HepG2 (cell line): ENCODE measurements at regions of chr2 and their contacts with region 1.

Region 1: GRCh38 chr2:134118279-134119116 is 135.4 kb upstream of the MGAT5 start:
- DNase-seq: peak; percentile 92
- ATAC-seq: peak; percentile 47
- H3K4me3 ChIP-seq: peak overlapping the region; percentile 80 to 90 (median 83)
- H3K27ac ChIP-seq: no peak overlapping the region
- H3K4me1 ChIP-seq: peaks cover 44% of the 10 kb centered on the region
- H3K27me3 ChIP-seq: no peaks in the 10 kb centered on the region
- CTCF ChIP-seq: peak; percentile 93
- EP300 ChIP-seq: 0 out of 4 replicates have a peak, but pooled peaks of 1 of the 2 experiments have one; percentile 9
- POLR2A ChIP-seq: no peak
- RAD21 ChIP-seq: peak; percentile 94

Region 2: DNA sequence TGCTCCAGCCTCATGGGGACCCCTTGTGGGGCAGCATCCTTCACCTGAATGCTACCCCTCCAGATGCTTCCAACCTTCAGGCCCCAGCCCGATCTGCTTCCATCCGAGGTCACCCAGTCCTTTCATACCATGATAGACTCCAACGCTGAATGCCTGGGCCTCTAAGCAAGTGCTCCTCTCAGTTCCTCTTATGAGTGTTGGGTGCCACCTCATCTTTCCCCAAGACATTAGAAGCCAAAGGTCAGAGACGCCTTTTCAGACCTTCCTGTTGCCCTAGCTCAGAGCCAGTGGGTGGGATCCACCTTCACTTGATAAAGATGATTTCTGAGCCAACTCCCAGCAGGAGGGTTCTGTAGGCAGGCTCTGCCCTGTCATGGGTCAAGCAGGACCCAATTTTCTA is 39.1 kb before region 1 on chr2:
- CTCF ChIA-PET with region 1: no interaction called
- POLR2A ChIA-PET with region 1: no interaction called
- in situ Hi-C with region 1: no loop called
- intact Hi-C with region 1: no loop called
- DNase-seq: no peak
- ATAC-seq: no peak
- H3K4me3 ChIP-seq: no peak overlapping the region
- H3K27ac ChIP-seq: no peak overlapping the region
- H3K4me1 ChIP-seq: no peaks in the 10 kb centered on the region
- H3K27me3 ChIP-seq: peaks cover 1 to 15% of the 10 kb centered on the region in 2 experiments; a peak in 4 of 5 replicates
- CTCF ChIP-seq: no peak
- EP300 ChIP-seq: no peak
- POLR2A ChIP-seq: no peak
- RAD21 ChIP-seq: no peak

Region 3: GRCh38 chr2:134098321-134098720 is 20.2 kb before region 1 on chr2:
- CTCF ChIA-PET with region 1: no interaction called
- POLR2A ChIA-PET with region 1: no interaction called
- in situ Hi-C with region 1: no loop called
- intact Hi-C with region 1: loop called (anchors 2 kb)
- DNase-seq: no peak
- ATAC-seq: peak; percentile 35; the same call in 2 of the 3 replicates
- H3K4me3 ChIP-seq: no peak overlapping the region
- H3K27ac ChIP-seq: no peak overlapping the region
- H3K4me1 ChIP-seq: peaks cover 55% of the 10 kb centered on the region
- H3K27me3 ChIP-seq: no peaks in the 10 kb centered on the region
- CTCF ChIP-seq: no peak
- EP300 ChIP-seq: no peak
- POLR2A ChIP-seq: no peak
- RAD21 ChIP-seq: no peak

Region 4: DNA sequence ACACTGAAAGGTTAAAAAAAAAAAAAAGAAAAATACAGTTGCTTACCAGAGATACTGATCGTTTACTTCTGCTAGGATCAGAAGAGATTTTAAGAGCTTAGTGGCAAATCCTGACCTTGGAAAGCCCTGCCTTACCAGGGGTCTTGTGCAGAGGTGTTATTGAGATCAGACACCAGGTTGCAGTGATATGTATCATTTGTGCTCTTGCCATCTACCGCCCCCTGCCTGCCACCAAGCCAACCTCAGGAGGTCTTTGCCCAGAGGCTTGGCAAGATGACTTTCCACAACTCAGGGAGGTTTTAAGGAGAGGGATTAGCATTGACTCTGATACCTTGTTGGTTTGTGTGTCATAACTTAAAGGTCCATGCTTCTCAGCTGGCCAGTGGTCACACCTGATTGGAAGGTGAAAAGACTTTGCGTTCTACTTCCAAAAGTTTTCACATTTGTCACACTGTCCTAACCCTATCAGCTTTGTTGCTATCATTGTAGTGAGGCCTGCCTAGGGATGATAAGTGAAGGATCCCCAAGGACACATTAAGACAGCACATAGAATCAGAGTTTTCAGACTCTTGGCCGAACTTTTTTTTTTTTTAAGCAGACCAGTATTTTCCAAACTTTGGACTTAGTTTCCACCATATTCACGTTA is 89.2 kb after region 1 on chr2:
- CTCF ChIA-PET with region 1: interaction called, 60 read pairs
- POLR2A ChIA-PET with region 1: interaction called, 8 read pairs
- in situ Hi-C with region 1: loop called (anchors 5 kb)
- intact Hi-C with region 1: loop called (anchors 5 kb)
- DNase-seq: peak; percentile 48
- ATAC-seq: peak; percentile 99
- H3K4me3 ChIP-seq: no peak overlapping the region
- H3K27ac ChIP-seq: no peak overlapping the region
- H3K4me1 ChIP-seq: peaks cover 17% of the 10 kb centered on the region
- H3K27me3 ChIP-seq: no peaks in the 10 kb centered on the region
- CTCF ChIP-seq: peak; percentile 81
- EP300 ChIP-seq: no peak
- POLR2A ChIP-seq: no peak
- RAD21 ChIP-seq: peak; percentile 81

Region 5: GRCh38 chr2:134245340-134245984 is 127.0 kb after region 1 on chr2:
- CTCF ChIA-PET with region 1: interaction called, 32 read pairs
- POLR2A ChIA-PET with region 1: interaction called, 14 read pairs
- in situ Hi-C with region 1: loop called (anchors 5 kb)
- intact Hi-C with region 1: loop called (anchors 1 kb)
- DNase-seq: peak; percentile 57
- ATAC-seq: peak; percentile 63
- H3K4me3 ChIP-seq: no peak overlapping the region
- H3K27ac ChIP-seq: no peak overlapping the region
- H3K4me1 ChIP-seq: peaks cover 53% of the 10 kb centered on the region
- H3K27me3 ChIP-seq: no peaks in the 10 kb centered on the region
- CTCF ChIP-seq: peak; percentile 83
- EP300 ChIP-seq: no peak
- POLR2A ChIP-seq: no peak
- RAD21 ChIP-seq: peak; percentile 69; the same call in 1 of the 2 replicates

Region 6: DNA sequence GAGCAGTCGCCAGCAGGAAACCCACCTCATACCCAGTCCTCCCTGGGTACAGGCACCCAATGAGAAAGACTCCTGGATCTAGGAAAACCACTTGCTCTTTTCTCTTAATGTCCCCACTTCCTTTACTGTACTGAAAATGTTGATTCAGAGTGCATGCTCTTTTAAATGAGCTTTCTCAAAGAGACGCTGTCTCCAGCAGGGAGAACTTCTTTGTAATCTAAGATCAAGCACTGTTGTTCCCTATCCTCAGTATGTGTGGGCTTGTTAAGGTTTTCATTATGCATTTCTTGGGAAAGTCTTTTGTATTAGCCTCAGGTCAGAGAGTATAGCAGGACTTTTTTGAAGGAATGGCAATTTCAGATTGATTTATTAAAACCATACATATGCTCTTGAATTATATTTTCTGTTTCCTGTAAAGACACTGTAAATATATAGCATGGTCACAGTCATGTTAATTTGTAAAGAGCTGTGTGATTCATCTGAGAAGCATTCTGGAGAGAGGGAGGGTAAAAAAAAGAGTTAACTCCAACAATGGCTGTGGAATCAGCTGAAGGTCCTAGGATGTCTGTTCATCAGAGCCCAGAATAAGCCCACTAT is 313.4 kb after region 1 on chr2:
- CTCF ChIA-PET with region 1: no interaction called
- POLR2A ChIA-PET with region 1: interaction called, 4 read pairs
- in situ Hi-C with region 1: no loop called
- intact Hi-C with region 1: loop called (anchors 5 kb)
- DNase-seq: no peak
- ATAC-seq: peak; percentile 11
- H3K4me3 ChIP-seq: no peak overlapping the region; a peak in 1 of 6 replicates
- H3K27ac ChIP-seq: peak overlapping the region; percentile 56
- H3K4me1 ChIP-seq: peaks cover 65% of the 10 kb centered on the region
- H3K27me3 ChIP-seq: no peaks in the 10 kb centered on the region
- CTCF ChIP-seq: no peak
- EP300 ChIP-seq: no peak
- POLR2A ChIP-seq: no peak
- RAD21 ChIP-seq: no peak

Region 7: GRCh38 chr2:134460583-134460998 is 342.1 kb after region 1 on chr2:
- CTCF ChIA-PET with region 1: no interaction called
- POLR2A ChIA-PET with region 1: no interaction called
- in situ Hi-C with region 1: loop called (anchors 10 kb)
- intact Hi-C with region 1: loop called (anchors 2 kb)
- DNase-seq: peak; percentile 76
- ATAC-seq: peak; percentile 89
- H3K4me3 ChIP-seq: no peak overlapping the region
- H3K27ac ChIP-seq: no peak overlapping the region
- H3K4me1 ChIP-seq: peaks cover 42% of the 10 kb centered on the region
- H3K27me3 ChIP-seq: peaks cover 0 to 3% of the 10 kb centered on the region in 2 experiments; a peak in 3 of 5 replicates
- CTCF ChIP-seq: peak; percentile 97
- EP300 ChIP-seq: no peak
- POLR2A ChIP-seq: no peak
- RAD21 ChIP-seq: peak; percentile 95